OCI-LY7 (cell line): ENCODE measurements at regions of chr20 and their contacts with region 1.

Region 1: GRCh38 chr20:8254911-8255582 is 123.0 kb downstream of the PLCB1 start:
- DNase-seq: no peak
- H3K4me3 ChIP-seq: no peak overlapping the region
- H3K27ac ChIP-seq: no peak overlapping the region
- H3K4me1 ChIP-seq: peaks cover 12% of the 10 kb centered on the region
- CTCF ChIP-seq: no peak

Region 2: DNA sequence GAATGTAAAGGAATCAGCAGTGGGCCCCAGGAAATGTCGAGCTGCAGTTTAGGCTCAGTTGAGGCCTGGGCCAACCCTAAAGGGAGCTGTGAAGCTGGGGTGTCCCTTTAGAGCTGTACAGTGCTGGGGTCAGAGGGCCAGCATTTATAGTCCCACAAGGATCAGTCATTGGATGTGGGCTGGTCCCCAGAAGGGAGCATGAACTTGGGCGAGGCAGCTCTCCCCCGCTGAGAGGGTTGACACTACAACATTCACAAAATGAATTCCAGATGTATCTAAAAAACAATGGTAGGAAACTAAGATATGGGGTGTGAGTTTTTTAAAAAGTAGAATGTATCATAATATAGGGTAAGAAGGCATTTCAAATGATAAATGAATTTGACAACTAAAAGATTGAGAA is 205.7 kb before region 1 on chr20:
- CTCF ChIA-PET with region 1: no interaction called
- POLR2A ChIA-PET with region 1: no interaction called
- intact Hi-C with region 1: loop called (anchors 5 kb)
- DNase-seq: no peak
- H3K4me3 ChIP-seq: no peak overlapping the region
- H3K27ac ChIP-seq: no peak overlapping the region
- H3K4me1 ChIP-seq: no peaks in the 10 kb centered on the region
- CTCF ChIP-seq: no peak

Region 3: DNA sequence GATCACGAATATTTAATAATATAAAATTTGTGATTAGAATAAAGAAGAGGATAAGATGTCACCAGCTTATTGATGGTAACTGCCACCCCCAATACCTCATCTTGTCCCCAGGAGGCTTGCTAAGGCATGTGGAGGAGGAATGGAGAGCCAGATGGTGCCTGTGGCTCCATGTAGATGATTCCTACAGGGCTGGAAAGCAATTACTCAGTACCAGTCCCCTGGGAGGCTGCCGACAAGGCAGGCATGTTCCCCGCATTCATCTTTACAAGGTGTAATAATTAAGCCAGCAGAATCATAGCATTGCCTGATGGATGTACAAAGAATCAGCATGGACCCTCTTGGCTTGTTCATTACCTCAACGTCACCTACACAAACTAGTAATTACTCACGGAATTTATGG is 32.3 kb after region 1 on chr20:
- CTCF ChIA-PET with region 1: no interaction called
- POLR2A ChIA-PET with region 1: no interaction called
- intact Hi-C with region 1: no loop called
- DNase-seq: no peak
- H3K4me3 ChIP-seq: no peak overlapping the region
- H3K27ac ChIP-seq: no peak overlapping the region
- H3K4me1 ChIP-seq: no peaks in the 10 kb centered on the region
- CTCF ChIP-seq: no peak